ENCODE measurements at regions of chr13 and their contacts with region 1.

Region 1: GRCh38 chr13:75870397-75870903 is 234.3 kb downstream of the LMO7 start:
- DNase-seq: peak; percentile 15
- H3K4me3 Mint-ChIP-seq: peak overlapping the region; percentile 40
- H3K27ac Mint-ChIP-seq: no peak overlapping the region
- H3K4me1 Mint-ChIP-seq: peaks cover 16% of the 10 kb centered on the region
- H3K27me3 Mint-ChIP-seq: peaks cover 5% of the 10 kb centered on the region

Region 2: GRCh38 chr13:75687150-75687763 is 183.2 kb before region 1 on chr13:
- CTCF ChIA-PET with region 1: interaction called, 28 read pairs
- intact Hi-C with region 1: no loop called
- DNase-seq: no peak
- H3K4me3 Mint-ChIP-seq: no peak overlapping the region
- H3K27ac Mint-ChIP-seq: no peak overlapping the region
- H3K4me1 Mint-ChIP-seq: peaks cover 12% of the 10 kb centered on the region
- H3K27me3 Mint-ChIP-seq: no peaks in the 10 kb centered on the region

Measured in activated naive CD4-positive, alpha-beta T cell treated with anti-CD3 and anti-CD28 coated beads for 36 hours (primary cell).